ENCODE measurements at regions of chr3 and their contacts with region 1.

Region 1: GRCh38 chr3:14508961-14509795 is 31.0 kb downstream of the GRIP2 start:
- DNase-seq: peak; percentile 87
- ATAC-seq: peak; percentile 91
- H3K4me3 Mint-ChIP-seq: no peak overlapping the region
- H3K27ac Mint-ChIP-seq: no peak overlapping the region
- H3K4me1 Mint-ChIP-seq: peaks cover 2% of the 10 kb centered on the region
- H3K27me3 Mint-ChIP-seq: peaks cover 4% of the 10 kb centered on the region

Region 2: DNA sequence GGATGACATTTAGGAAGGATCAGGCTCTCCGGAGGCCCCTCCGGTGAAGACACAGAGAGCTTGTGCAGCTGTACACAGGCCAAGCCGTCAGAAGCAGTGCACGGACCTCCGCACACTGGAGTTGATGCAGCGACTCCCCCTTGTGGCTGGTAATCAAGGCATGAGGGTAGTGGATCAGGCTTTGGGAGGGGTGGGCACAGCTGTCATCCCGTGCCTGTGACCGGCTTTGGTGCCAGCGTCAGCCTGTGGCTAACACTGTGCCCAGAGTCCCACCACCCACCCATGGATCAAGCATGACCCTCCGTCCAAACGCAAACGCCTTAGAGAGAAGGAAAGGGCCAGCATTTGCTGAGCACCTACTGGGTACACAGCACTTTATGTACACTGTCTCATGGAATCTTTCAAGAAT is 39.1 kb after region 1 on chr3:
- CTCF ChIA-PET with region 1: interaction called, 4 read pairs
- POLR2A ChIA-PET with region 1: no interaction called
- intact Hi-C with region 1: loop called (anchors 1 to 2 kb)
- DNase-seq: peak; percentile 69
- ATAC-seq: peak; percentile 82
- H3K4me3 Mint-ChIP-seq: no peak overlapping the region
- H3K27ac Mint-ChIP-seq: no peak overlapping the region
- H3K4me1 Mint-ChIP-seq: no peaks in the 10 kb centered on the region
- H3K27me3 Mint-ChIP-seq: peaks cover 15% of the 10 kb centered on the region

Measured in activated CD4-positive, alpha-beta T cell treated with anti-CD3 and anti-CD28 coated beads for 36 hours (primary cell).